ENCODE measurements at regions of chr1 and their contacts with region 1.

Region 1: GRCh38 chr1:158203693-158204457 is 23.2 kb downstream of the CD1D start:
- DNase-seq: peak in 1 of 2 donors; percentile 74
- ATAC-seq: peak; percentile 47 to 71 (median 61)
- H3K4me3 ChIP-seq: no peak overlapping the region
- H3K4me3 Mint-ChIP-seq: no peak overlapping the region
- H3K27ac ChIP-seq: no peak overlapping the region
- H3K27ac Mint-ChIP-seq: no peak overlapping the region
- H3K4me1 ChIP-seq: no peaks in the 10 kb centered on the region
- H3K4me1 Mint-ChIP-seq: no peaks in the 10 kb centered on the region
- H3K27me3 ChIP-seq: peaks cover 4% of the 10 kb centered on the region
- H3K27me3 Mint-ChIP-seq: peaks cover 15 to 30% of the 10 kb centered on the region in 2 donors
- CTCF ChIP-seq: peak; percentile 81

Region 2: GRCh38 chr1:158131217-158131616 is 72.7 kb before region 1 on chr1:
- intact Hi-C with region 1: no loop called
- DNase-seq: no peak
- ATAC-seq: no peak
- H3K4me3 ChIP-seq: no peak overlapping the region
- H3K4me3 Mint-ChIP-seq: no peak overlapping the region
- H3K27ac ChIP-seq: no peak overlapping the region
- H3K27ac Mint-ChIP-seq: no peak overlapping the region
- H3K4me1 ChIP-seq: peaks cover 4% of the 10 kb centered on the region
- H3K4me1 Mint-ChIP-seq: no peaks in the 10 kb centered on the region
- H3K27me3 ChIP-seq: no peaks in the 10 kb centered on the region
- H3K27me3 Mint-ChIP-seq: peaks cover 14 to 17% of the 10 kb centered on the region in 2 donors
- CTCF ChIP-seq: no peak

Region 3: GRCh38 chr1:158177700-158178450 is 26.0 kb before region 1 on chr1:
- intact Hi-C with region 1: no loop called
- DNase-seq: peak in 1 of 2 donors; percentile 3
- ATAC-seq: peak; percentile 69 to 89 (median 76)
- H3K4me3 ChIP-seq: peak overlapping the region; percentile 15
- H3K4me3 Mint-ChIP-seq: peak overlapping the region; percentile 26
- H3K27ac ChIP-seq: no peak overlapping the region
- H3K27ac Mint-ChIP-seq: no peak overlapping the region
- H3K4me1 ChIP-seq: peaks cover 16% of the 10 kb centered on the region
- H3K4me1 Mint-ChIP-seq: peaks cover 16 to 25% of the 10 kb centered on the region in 2 donors
- H3K27me3 ChIP-seq: peaks cover 17% of the 10 kb centered on the region
- H3K27me3 Mint-ChIP-seq: peaks cover 54 to 94% of the 10 kb centered on the region in 2 donors
- CTCF ChIP-seq: no peak

Region 4: GRCh38 chr1:158310623-158311022 is 106.7 kb after region 1 on chr1:
- intact Hi-C with region 1: no loop called
- DNase-seq: no peak
- ATAC-seq: no peak
- H3K4me3 ChIP-seq: no peak overlapping the region
- H3K4me3 Mint-ChIP-seq: no peak overlapping the region
- H3K27ac ChIP-seq: no peak overlapping the region
- H3K27ac Mint-ChIP-seq: no peak overlapping the region
- H3K4me1 ChIP-seq: no peaks in the 10 kb centered on the region
- H3K4me1 Mint-ChIP-seq: no peaks in the 10 kb centered on the region
- H3K27me3 ChIP-seq: no peaks in the 10 kb centered on the region
- H3K27me3 Mint-ChIP-seq: peaks cover 11 to 38% of the 10 kb centered on the region in 2 donors
- CTCF ChIP-seq: no peak

Region 5: DNA sequence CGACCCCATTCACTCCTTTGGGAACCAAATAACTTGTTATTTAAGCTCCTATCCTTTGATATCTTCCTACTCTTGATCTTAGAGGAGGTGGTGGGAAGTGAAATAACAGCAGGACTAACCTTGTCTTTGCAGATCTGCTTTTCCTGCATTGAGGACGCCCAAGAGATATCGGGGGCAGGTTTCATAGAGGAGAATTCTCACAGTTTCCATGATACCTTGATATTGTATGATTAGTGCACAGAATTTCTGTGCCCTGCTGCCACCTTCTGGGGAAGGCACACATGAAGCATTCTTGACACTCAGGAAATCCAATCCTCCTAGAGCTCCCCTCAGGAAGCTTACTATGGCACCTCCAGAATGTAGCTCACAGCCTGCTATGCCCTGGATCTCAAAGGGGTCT is 125.9 kb after region 1 on chr1:
- intact Hi-C with region 1: loop called (anchors 2 kb)
- DNase-seq: peak in 1 of 2 donors; percentile 34
- ATAC-seq: no peak
- H3K4me3 ChIP-seq: no peak overlapping the region
- H3K4me3 Mint-ChIP-seq: no peak overlapping the region
- H3K27ac ChIP-seq: no peak overlapping the region
- H3K27ac Mint-ChIP-seq: no peak overlapping the region
- H3K4me1 ChIP-seq: no peaks in the 10 kb centered on the region
- H3K4me1 Mint-ChIP-seq: peaks cover 13 to 15% of the 10 kb centered on the region in 2 donors
- H3K27me3 ChIP-seq: no peaks in the 10 kb centered on the region
- H3K27me3 Mint-ChIP-seq: no peaks in the 10 kb centered on the region
- CTCF ChIP-seq: no peak

Region 6: GRCh38 chr1:158998781-158999161 is 794.9 kb after region 1 on chr1:
- intact Hi-C with region 1: loop called (anchors 5 kb)
- DNase-seq: peak in 1 of 2 donors; percentile 84
- ATAC-seq: peak; percentile 82 to 92 (median 89)
- H3K4me3 ChIP-seq: no peak overlapping the region
- H3K4me3 Mint-ChIP-seq: peak overlapping the region; percentile 42
- H3K27ac ChIP-seq: no peak overlapping the region
- H3K27ac Mint-ChIP-seq: peak overlapping the region; percentile 80 to 90
- H3K4me1 ChIP-seq: peaks cover 14% of the 10 kb centered on the region
- H3K4me1 Mint-ChIP-seq: peaks cover 46 to 50% of the 10 kb centered on the region in 2 donors
- H3K27me3 ChIP-seq: no peaks in the 10 kb centered on the region
- H3K27me3 Mint-ChIP-seq: no peaks in the 10 kb centered on the region
- CTCF ChIP-seq: peak; percentile 97

Region 7: DNA sequence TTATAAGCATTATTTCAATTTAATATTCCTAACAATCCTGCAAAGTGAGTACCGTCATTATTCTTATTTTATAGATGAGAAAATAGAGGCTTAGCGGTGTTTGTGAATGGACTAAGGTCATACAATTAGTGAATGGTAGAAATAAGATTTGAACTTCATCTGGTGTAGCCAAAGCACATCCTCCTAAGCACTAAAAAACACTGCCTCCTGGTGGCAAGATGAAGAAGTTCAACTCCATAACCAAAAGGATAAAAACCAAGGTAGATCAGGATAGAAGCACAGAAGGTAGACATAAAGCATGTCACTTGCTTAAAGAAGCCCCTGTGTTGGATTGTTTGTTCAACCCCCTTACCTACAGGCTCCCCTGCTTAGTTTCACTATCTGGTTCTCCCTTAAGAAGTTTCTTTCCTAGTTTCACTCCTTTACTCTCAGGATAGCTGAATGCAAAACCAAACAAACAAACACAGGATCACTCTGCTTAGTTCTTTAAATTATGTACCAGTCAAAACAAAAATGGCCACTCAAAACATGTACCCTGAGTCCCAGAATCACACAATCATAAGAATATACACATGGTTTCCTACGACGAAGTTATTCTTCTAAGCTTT is 885.4 kb after region 1 on chr1:
- intact Hi-C with region 1: loop called (anchors 5 kb)
- DNase-seq: peak in 1 of 2 donors; percentile 73
- ATAC-seq: peak in 1 of 3 donors; percentile 46
- H3K4me3 ChIP-seq: no peak overlapping the region
- H3K4me3 Mint-ChIP-seq: no peak overlapping the region
- H3K27ac ChIP-seq: no peak overlapping the region
- H3K27ac Mint-ChIP-seq: no peak overlapping the region
- H3K4me1 ChIP-seq: peaks cover 11% of the 10 kb centered on the region
- H3K4me1 Mint-ChIP-seq: peaks cover 21 to 25% of the 10 kb centered on the region in 2 donors
- H3K27me3 ChIP-seq: no peaks in the 10 kb centered on the region
- H3K27me3 Mint-ChIP-seq: no peaks in the 10 kb centered on the region
- CTCF ChIP-seq: peak; percentile 77